Naive thymus-derived CD4-positive, alpha-beta T cell (primary cell): ENCODE measurements at regions of chr2 and their contacts with region 1.

Region 1: GRCh38 chr2:160109936-160110673 is 47.7 kb upstream of the PLA2R1 start:
- DNase-seq: peak in 7 of 9 donors; percentile 34 to 74 (median 66)
- ATAC-seq: peak; percentile 85
- H3K4me3 ChIP-seq: no peak overlapping the region
- H3K4me3 Mint-ChIP-seq: no peak overlapping the region
- H3K27ac ChIP-seq: no peak overlapping the region
- H3K27ac Mint-ChIP-seq: no peak overlapping the region
- H3K4me1 ChIP-seq: no peaks in the 10 kb centered on the region
- H3K4me1 Mint-ChIP-seq: no peaks in the 10 kb centered on the region
- H3K27me3 ChIP-seq: no peaks in the 10 kb centered on the region
- H3K27me3 Mint-ChIP-seq: peaks cover 0 to 24% (median 8%) of the 10 kb centered on the region in 5 donors

Region 2: DNA sequence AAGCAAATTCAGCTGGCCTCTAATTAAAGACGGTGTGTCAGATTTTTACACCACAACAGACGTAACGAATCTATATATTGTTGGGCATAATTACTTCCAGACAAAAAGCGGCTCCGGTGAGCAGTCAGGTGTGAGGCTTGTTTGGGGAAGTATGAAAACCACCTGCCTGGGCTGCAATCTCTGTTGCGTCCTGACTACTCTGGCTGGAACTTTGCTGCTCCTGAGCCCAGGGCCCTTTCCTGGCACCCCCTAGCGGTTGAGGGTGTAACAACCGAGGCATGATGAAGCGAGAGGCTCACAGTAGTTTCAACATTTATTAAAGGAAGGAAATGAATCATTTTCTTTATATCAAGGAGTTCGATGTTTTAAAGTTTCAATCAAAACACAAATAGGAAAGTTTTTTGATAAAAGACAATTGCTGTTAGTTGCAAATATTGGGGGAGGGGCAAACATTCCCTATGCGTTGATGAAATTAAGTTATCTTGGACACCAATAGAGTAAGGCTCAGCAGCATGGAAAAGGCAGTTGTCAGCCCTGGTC is 100.6 kb after region 1 on chr2:
- CTCF ChIA-PET with region 1: interaction called, 10 read pairs
- POLR2A ChIA-PET with region 1: no interaction called
- intact Hi-C with region 1: loop called (anchors 1 kb)
- DNase-seq: peak; percentile 46 to 79 (median 71)
- ATAC-seq: peak; percentile 90
- H3K4me3 ChIP-seq: no peak overlapping the region
- H3K4me3 Mint-ChIP-seq: no peak overlapping the region
- H3K27ac ChIP-seq: no peak overlapping the region
- H3K27ac Mint-ChIP-seq: peak overlapping the region in 1 of 9 donors; percentile 19
- H3K4me1 ChIP-seq: no peaks in the 10 kb centered on the region
- H3K4me1 Mint-ChIP-seq: peaks cover 0 to 11% (median 8%) of the 10 kb centered on the region in 7 donors
- H3K27me3 ChIP-seq: no peaks in the 10 kb centered on the region
- H3K27me3 Mint-ChIP-seq: peaks cover 0 to 22% (median 5%) of the 10 kb centered on the region in 5 donors

Region 3: GRCh38 chr2:160353166-160353565 is 243.1 kb after region 1 on chr2:
- CTCF ChIA-PET with region 1: no interaction called
- POLR2A ChIA-PET with region 1: no interaction called
- intact Hi-C with region 1: loop called in 1 of 2 experiments (anchors 1 kb)
- DNase-seq: peak in 6 of 9 donors; percentile 14 to 45 (median 24)
- ATAC-seq: peak; percentile 72
- H3K4me3 ChIP-seq: no peak overlapping the region
- H3K4me3 Mint-ChIP-seq: peak overlapping the region in 1 of 10 donors; percentile 36
- H3K27ac ChIP-seq: no peak overlapping the region
- H3K27ac Mint-ChIP-seq: peak overlapping the region in 4 of 9 donors; percentile 51 to 81 (median 66)
- H3K4me1 ChIP-seq: peaks cover 0 to 5% of the 10 kb centered on the region in 2 donors
- H3K4me1 Mint-ChIP-seq: peaks cover 47 to 91% (median 83%) of the 10 kb centered on the region in 7 donors
- H3K27me3 ChIP-seq: no peaks in the 10 kb centered on the region
- H3K27me3 Mint-ChIP-seq: no peaks in the 10 kb centered on the region